ENCODE measurements at regions of chr22 and their contacts with region 1.

Region 1: DNA sequence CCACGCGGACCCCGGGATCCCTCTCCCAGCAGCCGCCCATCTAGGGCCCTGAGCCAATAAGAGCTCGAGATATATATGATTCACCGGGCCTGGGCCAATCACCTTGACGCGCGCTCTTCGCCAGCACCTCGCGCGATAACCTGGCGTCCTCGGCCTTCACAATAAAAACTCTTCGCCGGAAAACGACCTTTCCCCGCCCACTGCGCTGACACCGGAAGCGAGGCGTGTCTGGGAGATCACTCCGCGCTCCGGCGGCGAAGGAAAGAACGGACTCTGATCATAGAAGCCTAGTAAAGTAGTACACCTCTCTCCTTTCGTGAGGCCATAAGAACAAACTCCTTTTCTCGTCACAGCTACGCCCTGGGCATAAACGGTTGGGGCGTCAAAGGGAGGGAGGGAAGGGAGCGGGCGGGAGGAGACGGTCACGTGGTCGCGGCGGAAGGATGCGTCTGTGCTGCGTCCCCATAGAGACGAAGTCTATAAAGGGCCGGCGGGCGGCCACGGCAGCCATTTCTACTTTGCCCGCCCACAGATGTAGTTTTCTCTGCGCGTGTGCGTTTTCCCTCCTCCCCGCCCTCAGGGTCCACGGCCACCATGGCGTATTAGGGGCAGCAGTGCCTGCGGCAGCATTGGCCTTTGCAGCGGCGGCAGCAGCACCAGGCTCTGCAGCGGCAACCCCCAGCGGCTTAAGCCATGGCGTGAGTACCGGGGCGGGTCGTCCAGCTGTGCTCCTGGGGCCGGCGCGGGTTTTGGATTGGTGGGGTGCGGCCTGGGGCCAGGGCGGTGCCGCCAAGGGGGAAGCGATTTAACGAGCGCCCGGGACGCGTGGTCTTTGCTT is at the start of gene ATF4:
- DNase-seq: peak; percentile 99
- H3K4me3 ChIP-seq: peak within 1 kb of the TSS; percentile 97
- H3K27ac ChIP-seq: peak within 1 kb of the TSS; percentile 99
- H3K4me1 ChIP-seq: peaks cover 20% of the 10 kb centered on the region
- H3K27me3 ChIP-seq: no peaks in the 10 kb centered on the region
- CTCF ChIP-seq: no peak
- total RNA-seq, gene ATF4: 476 and 573 TPM in 2 replicates

Region 2: DNA sequence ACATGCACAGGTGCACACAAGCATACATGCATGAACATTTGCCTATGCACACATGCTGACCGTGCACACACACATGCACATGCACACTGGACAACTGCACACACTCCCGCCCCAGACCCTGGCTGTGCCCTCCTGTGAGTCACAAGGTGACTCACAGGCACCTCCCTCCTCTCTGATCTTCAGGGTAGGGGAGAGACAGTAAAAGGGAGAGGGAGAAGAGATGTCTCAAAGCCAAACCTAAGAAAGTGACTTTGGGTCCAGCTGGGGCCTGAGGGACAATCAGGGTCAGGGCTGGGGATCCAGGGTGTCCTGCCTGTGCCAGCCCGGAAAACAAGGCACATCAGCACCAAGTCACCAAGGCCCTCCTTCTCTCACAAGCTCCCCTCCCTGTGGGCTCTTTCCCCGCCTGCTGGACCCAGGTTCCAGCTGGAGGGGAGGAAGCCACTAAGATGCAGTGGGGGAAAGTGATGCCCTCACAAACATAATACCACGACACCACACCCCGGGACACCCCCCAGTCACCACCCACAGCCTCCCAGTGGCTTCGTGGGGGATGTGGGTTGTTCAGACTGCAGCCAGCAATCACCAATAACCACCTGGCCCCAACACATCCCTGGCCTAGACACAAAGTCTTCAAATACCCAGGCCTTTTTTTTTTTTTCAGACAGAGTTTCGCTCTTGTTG is 314.8 kb before region 1 on chr22:
- CTCF ChIA-PET with region 1: no interaction called
- POLR2A ChIA-PET with region 1: interaction called, 11 read pairs
- intact Hi-C with region 1: no loop called
- DNase-seq: no peak
- H3K4me3 ChIP-seq: no peak overlapping the region
- H3K27ac ChIP-seq: no peak overlapping the region
- H3K4me1 ChIP-seq: no peaks in the 10 kb centered on the region
- H3K27me3 ChIP-seq: no peaks in the 10 kb centered on the region
- CTCF ChIP-seq: no peak

Region 3: GRCh38 chr22:39388261-39389011 is 131.8 kb before region 1 on chr22:
- CTCF ChIA-PET with region 1: no interaction called
- POLR2A ChIA-PET with region 1: interaction called, 13 read pairs
- intact Hi-C with region 1: loop called (anchors 10 kb)
- DNase-seq: peak; percentile 67
- H3K4me3 ChIP-seq: peak overlapping the region; percentile 20
- H3K27ac ChIP-seq: no peak overlapping the region
- H3K4me1 ChIP-seq: no peaks in the 10 kb centered on the region
- H3K27me3 ChIP-seq: no peaks in the 10 kb centered on the region
- CTCF ChIP-seq: no peak

Region 4: GRCh38 chr22:39414886-39415285 is 105.4 kb before region 1 on chr22:
- CTCF ChIA-PET with region 1: interaction called, 11 read pairs
- POLR2A ChIA-PET with region 1: no interaction called
- intact Hi-C with region 1: no loop called
- DNase-seq: no peak
- H3K4me3 ChIP-seq: no peak overlapping the region
- H3K27ac ChIP-seq: no peak overlapping the region
- H3K4me1 ChIP-seq: no peaks in the 10 kb centered on the region
- H3K27me3 ChIP-seq: no peaks in the 10 kb centered on the region
- CTCF ChIP-seq: no peak

Region 5: GRCh38 chr22:39502109-39502788 is 18.0 kb before region 1 on chr22 and contains the start of gene MIEF1:
- CTCF ChIA-PET with region 1: interaction called, 4 read pairs
- POLR2A ChIA-PET with region 1: interaction called, 5 read pairs
- intact Hi-C with region 1: loop called (anchors 1 kb)
- DNase-seq: peak; percentile 95
- H3K4me3 ChIP-seq: peak within 1 kb of the TSS; percentile 82
- H3K27ac ChIP-seq: peak within 1 kb of the TSS; percentile 69
- H3K4me1 ChIP-seq: peaks cover 27% of the 10 kb centered on the region
- H3K27me3 ChIP-seq: no peaks in the 10 kb centered on the region
- CTCF ChIP-seq: peak; percentile 28; the same call in 1 of the 2 replicates
- total RNA-seq, gene MIEF1: 47.1 and 55.1 TPM in 2 replicates

Region 6: GRCh38 chr22:39674536-39674935 is 154.3 kb after region 1 on chr22:
- CTCF ChIA-PET with region 1: no interaction called
- POLR2A ChIA-PET with region 1: no interaction called
- intact Hi-C with region 1: no loop called
- DNase-seq: peak; percentile 36
- H3K4me3 ChIP-seq: no peak overlapping the region
- H3K27ac ChIP-seq: no peak overlapping the region
- H3K4me1 ChIP-seq: no peaks in the 10 kb centered on the region
- H3K27me3 ChIP-seq: no peaks in the 10 kb centered on the region
- CTCF ChIP-seq: no peak

Measured in A673 (cell line).